ENCODE measurements at regions of chr1 and their contacts with region 1.

Region 1: GRCh38 chr1:209692745-209693504 is 11.7 kb upstream of the HSD11B1 start:
- DNase-seq: peak; percentile 63 to 82
- ATAC-seq: peak; percentile 68

Region 2: GRCh38 chr1:209576798-209577197 is 116.1 kb before region 1 on chr1:
- intact Hi-C with region 1: loop called in 1 of 2 experiments (anchors 5 kb)
- DNase-seq: peak; percentile 63 to 82
- ATAC-seq: peak; percentile 99

Region 3: DNA sequence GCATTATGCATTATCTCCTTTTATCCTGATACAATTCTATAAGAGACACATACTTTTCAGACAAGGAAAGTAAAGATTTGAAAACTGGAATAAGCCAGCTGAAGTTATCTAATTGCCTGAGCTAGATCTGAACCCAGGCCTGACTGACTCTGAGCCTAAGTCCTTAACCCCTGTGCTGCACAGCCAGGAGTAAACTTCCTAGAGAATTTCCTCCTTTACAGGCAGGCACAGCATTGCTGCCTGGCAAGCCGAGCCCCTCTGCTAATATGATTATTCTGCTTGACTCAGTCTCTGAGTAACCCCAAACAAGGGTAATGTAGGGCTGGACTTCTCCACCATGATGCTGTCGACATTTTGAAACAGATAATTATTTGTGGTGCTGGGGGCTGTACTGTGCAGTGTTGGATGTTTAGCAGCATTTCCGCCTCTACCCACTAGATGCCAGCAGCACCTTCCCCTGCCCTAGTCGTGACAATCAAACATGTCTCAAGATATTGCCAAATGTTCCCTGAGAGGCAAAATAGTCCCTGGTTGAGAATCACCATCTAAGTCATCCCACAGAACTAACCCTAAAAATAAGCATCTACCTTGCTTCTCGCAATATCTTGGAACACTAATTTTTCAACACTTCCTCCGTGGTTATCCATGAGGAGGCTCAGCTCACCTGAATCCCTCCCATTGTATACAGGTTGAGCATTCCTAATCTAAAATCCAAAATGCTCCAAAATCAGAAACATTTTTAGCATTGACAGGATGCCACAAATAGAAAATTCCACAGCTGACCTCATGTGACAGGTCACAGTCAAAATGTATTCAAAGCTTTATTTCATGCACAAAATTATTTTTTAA is 90.9 kb before region 1 on chr1:
- intact Hi-C with region 1: loop called in 1 of 2 experiments (anchors 10 kb)
- DNase-seq: no peak
- ATAC-seq: peak; percentile 94

Region 4: GRCh38 chr1:209633335-209633997 is 59.5 kb before region 1 on chr1:
- intact Hi-C with region 1: loop called in 1 of 2 experiments (anchors 10 kb)
- DNase-seq: no peak
- ATAC-seq: no peak

Measured in left colon (tissue), 2 donors.